Esophagus muscularis mucosa (tissue), 4 donors: ENCODE measurements at regions of chr10 and their contacts with region 1.

Region 1: GRCh38 chr10:75099952-75100763 is 11.3 kb upstream of the SAMD8 start:
- DNase-seq: no peak
- H3K4me3 ChIP-seq: no peak overlapping the region
- H3K27ac ChIP-seq: no peak overlapping the region
- H3K4me1 ChIP-seq: peaks cover 6 to 15% (median 8%) of the 10 kb centered on the region in 4 donors
- H3K27me3 ChIP-seq: no peaks in the 10 kb centered on the region
- CTCF ChIP-seq: peak; percentile 96 to 100 (median 97)
- EP300 ChIP-seq: no peak
- POLR2A ChIP-seq: no peak

Region 2: GRCh38 chr10:74244097-74244685 is 856.0 kb before region 1 on chr10:
- intact Hi-C with region 1: loop called (anchors 2 kb)
- DNase-seq: no peak
- H3K4me3 ChIP-seq: no peak overlapping the region
- H3K27ac ChIP-seq: no peak overlapping the region
- H3K4me1 ChIP-seq: no peaks in the 10 kb centered on the region
- H3K27me3 ChIP-seq: no peaks in the 10 kb centered on the region
- CTCF ChIP-seq: peak; percentile 54 to 63 (median 57)
- EP300 ChIP-seq: no peak
- POLR2A ChIP-seq: no peak

Region 3: GRCh38 chr10:74262856-74263255 is 837.3 kb before region 1 on chr10:
- intact Hi-C with region 1: loop called (anchors 2 kb)
- DNase-seq: no peak
- H3K4me3 ChIP-seq: no peak overlapping the region
- H3K27ac ChIP-seq: no peak overlapping the region
- H3K4me1 ChIP-seq: peaks cover 0 to 14% (median 3%) of the 10 kb centered on the region in 4 donors
- H3K27me3 ChIP-seq: no peaks in the 10 kb centered on the region
- CTCF ChIP-seq: no peak
- EP300 ChIP-seq: no peak
- POLR2A ChIP-seq: no peak

Region 4: DNA sequence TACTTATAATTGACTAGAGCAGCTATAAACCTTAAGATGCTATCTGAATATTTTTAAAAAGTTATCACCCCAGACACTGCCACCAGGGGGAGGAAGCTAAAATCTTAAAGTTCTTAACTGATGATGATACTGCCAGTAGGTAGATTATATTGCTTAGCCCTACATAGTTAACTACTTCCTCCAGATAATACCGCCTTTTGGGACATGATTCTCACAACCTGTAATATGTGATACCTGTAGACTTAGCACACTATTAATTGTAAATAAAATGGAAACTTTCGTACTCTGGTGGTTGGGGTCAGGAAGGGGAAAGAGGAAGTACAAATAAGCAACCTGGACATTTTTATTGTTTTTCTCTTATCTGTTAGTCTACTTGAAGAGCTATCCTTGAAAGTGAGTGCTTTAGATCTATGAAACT is 680.2 kb before region 1 on chr10:
- intact Hi-C with region 1: loop called (anchors 5 kb)
- DNase-seq: no peak
- H3K4me3 ChIP-seq: no peak overlapping the region
- H3K27ac ChIP-seq: no peak overlapping the region
- H3K4me1 ChIP-seq: peaks cover 0 to 6% (median 0%) of the 10 kb centered on the region in 4 donors
- H3K27me3 ChIP-seq: no peaks in the 10 kb centered on the region
- CTCF ChIP-seq: peak; percentile 45 to 51 (median 50)
- EP300 ChIP-seq: no peak
- POLR2A ChIP-seq: no peak

Region 5: GRCh38 chr10:74967911-74968645 is 132.1 kb before region 1 on chr10:
- intact Hi-C with region 1: no loop called
- DNase-seq: no peak
- H3K4me3 ChIP-seq: no peak overlapping the region
- H3K27ac ChIP-seq: peak overlapping the region in 2 of 4 donors; percentile 2 to 38
- H3K4me1 ChIP-seq: peaks cover 10 to 40% (median 28%) of the 10 kb centered on the region in 4 donors
- H3K27me3 ChIP-seq: no peaks in the 10 kb centered on the region
- CTCF ChIP-seq: no peak
- EP300 ChIP-seq: no peak
- POLR2A ChIP-seq: no peak

Region 6: DNA sequence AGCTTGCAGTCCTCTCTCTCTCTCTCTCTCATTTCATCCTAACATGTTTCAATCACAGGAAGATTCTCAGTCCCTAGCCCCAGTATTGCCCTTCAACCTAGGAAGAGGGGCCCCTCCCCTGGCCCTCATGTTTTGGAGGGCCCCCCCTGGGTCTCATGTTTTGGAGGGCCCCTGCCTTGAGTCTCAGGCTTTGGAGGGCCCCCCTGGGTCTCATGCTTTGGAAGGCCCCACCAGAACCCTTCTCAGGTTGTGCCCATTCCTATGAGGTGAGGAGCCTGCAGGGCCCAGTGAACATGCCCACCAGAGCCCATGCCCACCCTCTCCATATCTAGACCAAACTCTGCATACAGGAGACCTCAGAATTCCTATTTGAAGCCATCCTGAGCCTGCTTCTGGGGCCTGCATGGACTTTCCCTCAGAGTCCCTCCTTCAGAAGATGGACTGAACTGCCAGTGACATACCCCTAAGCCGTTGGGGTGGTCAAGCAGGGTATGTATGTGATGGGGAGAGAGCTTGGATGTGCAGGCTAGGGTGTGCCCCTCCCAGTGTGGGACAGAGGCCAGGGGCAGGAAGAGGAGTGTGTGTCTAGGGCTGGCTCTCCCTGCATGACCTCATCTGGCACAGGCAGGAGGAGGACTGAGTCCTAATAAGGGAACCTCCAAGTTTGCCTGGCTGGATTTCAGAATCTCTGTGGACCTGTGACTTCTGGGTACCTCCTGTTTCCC is 102.3 kb after region 1 on chr10:
- intact Hi-C with region 1: no loop called
- DNase-seq: no peak
- H3K4me3 ChIP-seq: no peak overlapping the region
- H3K27ac ChIP-seq: peak overlapping the region; percentile 65 to 74 (median 70)
- H3K4me1 ChIP-seq: peaks cover 17 to 25% (median 18%) of the 10 kb centered on the region in 4 donors
- H3K27me3 ChIP-seq: no peaks in the 10 kb centered on the region
- CTCF ChIP-seq: no peak
- EP300 ChIP-seq: no peak
- POLR2A ChIP-seq: no peak